Endothelial cell of umbilical vein (primary cell): ENCODE measurements at regions of chr18 and their contacts with region 1.

Region 1: DNA sequence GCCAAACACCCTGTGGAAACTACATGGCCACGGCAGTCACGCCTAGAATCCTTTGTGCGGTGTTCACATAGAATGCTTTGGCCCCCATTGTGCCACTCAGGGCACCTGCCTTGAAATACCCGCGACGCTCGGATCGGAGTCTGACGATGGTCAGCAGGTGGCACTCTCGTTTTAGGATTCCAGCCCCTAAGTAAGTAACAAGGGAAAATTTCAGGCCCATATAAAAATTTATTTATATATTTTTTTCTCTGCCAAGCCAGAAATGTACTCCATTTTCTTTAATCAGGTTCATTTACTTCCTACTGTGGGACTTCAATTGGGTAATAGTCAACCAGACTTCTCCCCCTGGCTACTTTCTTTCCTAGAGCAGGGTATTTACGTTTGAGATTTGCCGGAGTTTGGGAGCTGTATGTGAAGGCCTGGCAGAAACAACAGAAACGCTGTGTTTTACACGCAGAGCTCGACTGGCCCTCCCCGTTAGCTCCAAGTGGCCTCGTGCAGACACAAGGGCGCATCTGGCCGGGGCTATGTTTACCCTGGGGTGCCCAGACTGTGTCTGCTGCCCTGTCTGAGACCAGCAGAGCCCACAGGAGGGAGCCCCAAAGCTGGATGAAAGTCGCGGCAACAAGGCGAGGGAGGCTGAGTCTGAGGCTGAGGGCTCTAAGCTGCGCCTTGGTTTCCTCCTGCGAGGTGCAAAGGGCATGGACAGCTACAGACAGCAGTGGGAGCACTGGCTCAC is 41.6 kb downstream of the LRRC30 start:
- DNase-seq: peak; percentile 79
- H3K4me3 ChIP-seq: no peak overlapping the region
- H3K27ac ChIP-seq: peak overlapping the region; percentile 72
- H3K4me1 ChIP-seq: peaks cover 18% of the 10 kb centered on the region
- H3K27me3 ChIP-seq: peaks cover 1 to 3% of the 10 kb centered on the region in 2 experiments
- CTCF ChIP-seq: peak; percentile 50 to 62
- POLR2A ChIP-seq: no peak

Region 2: GRCh38 chr18:5951515-5952091 is 1320.9 kb before region 1 on chr18:
- CTCF ChIA-PET with region 1: no interaction called
- POLR2A ChIA-PET with region 1: no interaction called
- dilution Hi-C with region 1: no loop called
- intact Hi-C with region 1: no loop called
- DNase-seq: no peak
- H3K4me3 ChIP-seq: no peak overlapping the region
- H3K27ac ChIP-seq: no peak overlapping the region
- H3K4me1 ChIP-seq: no peaks in the 10 kb centered on the region
- H3K27me3 ChIP-seq: no peaks in the 10 kb centered on the region
- CTCF ChIP-seq: no peak
- POLR2A ChIP-seq: no peak

Region 3: GRCh38 chr18:7237673-7238272 is 34.7 kb before region 1 on chr18:
- CTCF ChIA-PET with region 1: no interaction called
- POLR2A ChIA-PET with region 1: no interaction called
- dilution Hi-C with region 1: no loop called
- intact Hi-C with region 1: no loop called
- DNase-seq: no peak
- H3K4me3 ChIP-seq: no peak overlapping the region
- H3K27ac ChIP-seq: no peak overlapping the region
- H3K4me1 ChIP-seq: no peaks in the 10 kb centered on the region
- H3K27me3 ChIP-seq: peaks cover 2 to 3% of the 10 kb centered on the region in 2 experiments
- CTCF ChIP-seq: no peak
- POLR2A ChIP-seq: no peak

Region 4: DNA sequence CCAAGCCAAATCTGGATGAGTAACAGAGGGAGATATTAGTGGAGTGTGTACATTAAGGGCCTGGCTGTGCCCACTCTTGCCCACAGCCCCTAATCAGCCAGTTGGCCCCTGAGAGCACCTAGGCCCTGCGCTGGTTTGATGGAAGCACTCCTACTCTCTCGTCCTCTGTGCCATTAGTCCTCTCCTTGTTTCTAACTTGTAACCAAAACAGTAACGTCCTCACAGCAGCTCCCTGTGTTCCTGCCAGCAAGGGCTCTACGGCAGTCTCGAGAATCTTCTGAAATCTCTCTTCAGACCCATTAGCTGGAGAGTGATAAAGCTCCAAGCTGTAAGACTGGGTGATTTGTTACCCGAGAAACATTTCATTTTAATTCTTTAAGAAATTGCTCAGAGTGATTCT is 34.5 kb after region 1 on chr18:
- CTCF ChIA-PET with region 1: no interaction called
- POLR2A ChIA-PET with region 1: no interaction called
- dilution Hi-C with region 1: no loop called
- intact Hi-C with region 1: no loop called
- DNase-seq: no peak
- H3K4me3 ChIP-seq: no peak overlapping the region
- H3K27ac ChIP-seq: no peak overlapping the region
- H3K4me1 ChIP-seq: no peaks in the 10 kb centered on the region
- H3K27me3 ChIP-seq: peaks cover 2 to 12% of the 10 kb centered on the region in 2 experiments
- CTCF ChIP-seq: no peak
- POLR2A ChIP-seq: no peak

Region 5: GRCh38 chr18:7329016-7329415 is 56.5 kb after region 1 on chr18:
- CTCF ChIA-PET with region 1: interaction called, 27 read pairs
- POLR2A ChIA-PET with region 1: interaction called, 7 read pairs
- dilution Hi-C with region 1: no loop called
- intact Hi-C with region 1: loop called (anchors 1 kb)
- DNase-seq: no peak
- H3K4me3 ChIP-seq: no peak overlapping the region
- H3K27ac ChIP-seq: no peak overlapping the region
- H3K4me1 ChIP-seq: peaks cover 24% of the 10 kb centered on the region
- H3K27me3 ChIP-seq: no peaks in the 10 kb centered on the region
- CTCF ChIP-seq: no peak
- POLR2A ChIP-seq: no peak

Region 6: DNA sequence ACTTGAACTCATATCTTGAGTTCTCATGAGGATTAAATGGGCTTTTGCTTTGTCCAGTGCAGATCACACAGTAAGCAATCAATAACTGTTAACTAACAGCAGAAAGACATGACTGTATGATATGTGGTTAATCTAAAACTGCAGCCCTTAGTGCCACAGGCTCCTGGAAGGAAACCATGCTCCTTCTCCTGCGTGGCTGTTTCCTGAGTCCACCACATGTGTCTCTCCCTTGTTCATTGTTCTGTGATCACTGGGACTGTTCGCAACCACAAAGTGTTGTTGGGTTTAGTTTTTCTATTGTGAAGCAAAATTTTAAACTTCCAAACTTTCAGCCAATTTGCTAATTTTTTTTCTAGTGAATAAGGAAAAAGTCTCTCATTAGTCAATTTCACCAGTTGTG is 163.7 kb after region 1 on chr18:
- CTCF ChIA-PET with region 1: interaction called, 11 read pairs
- POLR2A ChIA-PET with region 1: no interaction called
- dilution Hi-C with region 1: no loop called
- intact Hi-C with region 1: no loop called
- DNase-seq: no peak
- H3K4me3 ChIP-seq: no peak overlapping the region
- H3K27ac ChIP-seq: no peak overlapping the region
- H3K4me1 ChIP-seq: no peaks in the 10 kb centered on the region
- H3K27me3 ChIP-seq: no peaks in the 10 kb centered on the region
- CTCF ChIP-seq: no peak
- POLR2A ChIP-seq: no peak

Region 7: GRCh38 chr18:7559709-7560319 is 287.3 kb after region 1 on chr18:
- CTCF ChIA-PET with region 1: interaction called, 344 read pairs
- POLR2A ChIA-PET with region 1: no interaction called
- dilution Hi-C with region 1: no loop called
- intact Hi-C with region 1: no loop called
- DNase-seq: no peak
- H3K4me3 ChIP-seq: no peak overlapping the region
- H3K27ac ChIP-seq: no peak overlapping the region
- H3K4me1 ChIP-seq: peaks cover 22% of the 10 kb centered on the region
- H3K27me3 ChIP-seq: no peaks in the 10 kb centered on the region
- CTCF ChIP-seq: no peak
- POLR2A ChIP-seq: no peak

Region 8: GRCh38 chr18:7755753-7756475 is 483.4 kb after region 1 on chr18:
- CTCF ChIA-PET with region 1: interaction called, 4 read pairs
- POLR2A ChIA-PET with region 1: no interaction called
- dilution Hi-C with region 1: no loop called
- intact Hi-C with region 1: loop called (anchors 2 kb)
- DNase-seq: peak; percentile 62
- H3K4me3 ChIP-seq: no peak overlapping the region
- H3K27ac ChIP-seq: no peak overlapping the region
- H3K4me1 ChIP-seq: peaks cover 14% of the 10 kb centered on the region
- H3K27me3 ChIP-seq: no peaks in the 10 kb centered on the region
- CTCF ChIP-seq: peak in 1 of 2 donors; percentile 27
- POLR2A ChIP-seq: no peak

Region 9: GRCh38 chr18:8389391-8390340 is 1117.2 kb after region 1 on chr18:
- CTCF ChIA-PET with region 1: interaction called, 35 read pairs
- POLR2A ChIA-PET with region 1: no interaction called
- dilution Hi-C with region 1: no loop called
- intact Hi-C with region 1: loop called (anchors 1 kb)
- DNase-seq: peak; percentile 78
- H3K4me3 ChIP-seq: no peak overlapping the region
- H3K27ac ChIP-seq: no peak overlapping the region
- H3K4me1 ChIP-seq: peaks cover 4% of the 10 kb centered on the region
- H3K27me3 ChIP-seq: no peaks in the 10 kb centered on the region
- CTCF ChIP-seq: peak; percentile 81 to 82
- POLR2A ChIP-seq: no peak